Activated CD4-positive, alpha-beta memory T cell treated with anti-CD3 and anti-CD28 coated beads for 36 hours (primary cell): ENCODE measurements at regions of chr1 and their contacts with region 1.

Region 1: GRCh38 chr1:34786521-34787325 is 5.7 kb downstream of the GJB3 start:
- DNase-seq: peak; percentile 80
- H3K4me3 Mint-ChIP-seq: no peak overlapping the region
- H3K27ac Mint-ChIP-seq: no peak overlapping the region
- H3K4me1 Mint-ChIP-seq: peaks cover 7% of the 10 kb centered on the region
- H3K27me3 Mint-ChIP-seq: peaks cover 50% of the 10 kb centered on the region

Region 2: DNA sequence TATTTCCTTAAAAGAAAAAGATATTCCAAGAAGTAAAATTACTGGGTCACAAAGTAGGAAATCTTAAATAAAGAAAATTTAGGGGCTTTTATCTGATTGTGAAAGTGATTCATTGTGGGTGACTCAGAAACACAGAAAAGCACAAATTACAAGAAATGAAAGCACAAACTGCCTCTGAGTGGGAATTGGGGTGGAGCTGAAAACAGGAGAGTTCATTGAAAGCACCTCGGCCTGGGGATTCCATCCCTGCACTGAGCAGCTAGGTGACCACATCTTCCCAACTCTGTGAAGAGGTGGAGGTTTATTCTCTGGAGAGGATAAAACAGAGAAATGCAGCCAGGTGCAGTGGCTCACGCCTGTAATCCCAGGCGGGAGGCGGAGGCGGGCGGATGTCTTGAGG is 13.5 kb after region 1 on chr1:
- CTCF ChIA-PET with region 1: interaction called, 8 read pairs
- POLR2A ChIA-PET with region 1: no interaction called
- intact Hi-C with region 1: loop called (anchors 1 kb)
- DNase-seq: peak; percentile 55
- H3K4me3 Mint-ChIP-seq: no peak overlapping the region
- H3K27ac Mint-ChIP-seq: peak overlapping the region; percentile 53
- H3K4me1 Mint-ChIP-seq: peaks cover 21% of the 10 kb centered on the region
- H3K27me3 Mint-ChIP-seq: peaks cover 5% of the 10 kb centered on the region

Region 3: DNA sequence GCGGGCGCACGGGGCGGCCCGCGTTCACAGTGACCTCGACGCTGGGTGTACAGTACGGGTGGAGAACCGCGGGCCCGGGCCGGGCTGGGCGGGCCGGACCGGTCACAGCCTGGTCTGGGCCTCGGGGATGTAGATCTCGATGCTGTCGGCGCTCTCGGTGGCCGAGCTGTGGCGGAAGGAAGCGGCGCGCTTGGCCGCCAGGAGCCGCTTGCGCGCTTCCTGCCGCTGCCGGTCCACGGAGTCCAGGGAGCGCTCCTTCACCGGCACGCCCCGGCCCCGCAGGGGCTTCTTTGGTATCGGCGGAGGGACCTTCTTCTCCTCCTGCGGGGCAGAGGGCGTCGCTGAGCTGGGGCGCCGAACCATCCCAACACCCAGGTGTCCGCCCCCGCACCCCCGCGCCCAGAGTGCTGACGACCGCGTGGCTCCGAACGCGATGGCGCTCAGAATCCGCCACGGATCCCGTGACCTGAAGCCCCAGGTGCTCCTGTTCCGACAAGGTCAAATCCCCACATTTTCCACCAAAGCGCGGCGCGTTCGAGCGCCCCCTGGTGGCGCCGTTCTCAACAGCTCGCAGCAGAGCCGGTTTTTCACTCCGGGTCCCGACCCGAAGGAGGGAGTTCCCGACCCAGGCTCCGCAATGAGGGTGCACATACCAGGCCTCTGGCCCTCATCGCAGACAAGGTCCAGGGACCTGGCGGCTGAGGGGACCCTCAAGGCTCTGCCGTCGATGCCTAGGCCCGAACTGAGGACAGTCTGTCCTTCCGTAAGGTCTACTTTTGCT is 79.4 kb after region 1 on chr1:
- CTCF ChIA-PET with region 1: interaction called, 20 read pairs
- POLR2A ChIA-PET with region 1: no interaction called
- intact Hi-C with region 1: loop called (anchors 1 kb)
- DNase-seq: peak; percentile 96
- H3K4me3 Mint-ChIP-seq: peak overlapping the region; percentile 74
- H3K27ac Mint-ChIP-seq: peak overlapping the region; percentile 81
- H3K4me1 Mint-ChIP-seq: peaks cover 17% of the 10 kb centered on the region
- H3K27me3 Mint-ChIP-seq: no peaks in the 10 kb centered on the region